Activated CD8-positive, alpha-beta memory T cell treated with anti-CD3 and anti-CD28 coated beads, Interleukin-2, amount 10 ng/mL, durations not matched to agents 7 days and 5 days (primary cell): ENCODE measurements at regions of chr1 and their contacts with region 1.

Region 1: DNA sequence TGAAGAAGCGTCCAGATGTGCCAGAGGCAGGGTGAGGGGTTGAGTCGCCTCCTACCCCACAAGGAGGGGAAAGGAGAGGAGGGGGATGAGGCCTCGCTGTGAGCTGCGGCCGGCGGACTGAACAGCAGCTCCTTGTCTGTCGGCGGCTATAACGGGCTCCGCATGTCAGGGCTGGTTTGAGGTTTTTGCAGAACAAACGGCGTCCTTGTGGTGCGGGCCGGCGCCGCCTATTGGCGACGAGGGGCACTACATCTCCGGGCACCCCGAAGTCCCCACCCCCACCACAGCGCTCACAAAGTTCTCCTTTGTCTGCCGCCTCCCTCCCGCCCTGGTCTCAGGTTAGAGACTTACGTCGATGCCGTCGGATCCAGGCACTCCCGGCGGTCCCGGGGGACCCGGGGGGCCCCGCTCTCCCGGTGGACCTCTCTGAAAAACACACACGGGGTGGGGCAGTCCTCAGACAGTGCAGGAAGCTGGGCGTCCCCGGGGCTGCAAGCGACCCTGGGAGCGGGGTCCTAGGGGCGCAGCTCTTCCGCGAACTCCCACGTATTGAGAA is 1.8 kb downstream of the COL9A2 start:
- DNase-seq: peak; percentile 90
- ATAC-seq: peak; percentile 77
- H3K4me3 Mint-ChIP-seq: peak overlapping the region; percentile 74
- H3K27ac Mint-ChIP-seq: peak overlapping the region; percentile 66
- H3K4me1 Mint-ChIP-seq: peaks cover 42% of the 10 kb centered on the region
- H3K27me3 Mint-ChIP-seq: peaks cover 25% of the 10 kb centered on the region

Region 2: GRCh38 chr1:40153073-40153770 is 162.1 kb before region 1 on chr1:
- CTCF ChIA-PET with region 1: interaction called, 106 read pairs
- DNase-seq: peak; percentile 48
- ATAC-seq: peak; percentile 86
- H3K4me3 Mint-ChIP-seq: no peak overlapping the region
- H3K27ac Mint-ChIP-seq: no peak overlapping the region
- H3K4me1 Mint-ChIP-seq: peaks cover 11% of the 10 kb centered on the region
- H3K27me3 Mint-ChIP-seq: peaks cover 4% of the 10 kb centered on the region

Region 3: DNA sequence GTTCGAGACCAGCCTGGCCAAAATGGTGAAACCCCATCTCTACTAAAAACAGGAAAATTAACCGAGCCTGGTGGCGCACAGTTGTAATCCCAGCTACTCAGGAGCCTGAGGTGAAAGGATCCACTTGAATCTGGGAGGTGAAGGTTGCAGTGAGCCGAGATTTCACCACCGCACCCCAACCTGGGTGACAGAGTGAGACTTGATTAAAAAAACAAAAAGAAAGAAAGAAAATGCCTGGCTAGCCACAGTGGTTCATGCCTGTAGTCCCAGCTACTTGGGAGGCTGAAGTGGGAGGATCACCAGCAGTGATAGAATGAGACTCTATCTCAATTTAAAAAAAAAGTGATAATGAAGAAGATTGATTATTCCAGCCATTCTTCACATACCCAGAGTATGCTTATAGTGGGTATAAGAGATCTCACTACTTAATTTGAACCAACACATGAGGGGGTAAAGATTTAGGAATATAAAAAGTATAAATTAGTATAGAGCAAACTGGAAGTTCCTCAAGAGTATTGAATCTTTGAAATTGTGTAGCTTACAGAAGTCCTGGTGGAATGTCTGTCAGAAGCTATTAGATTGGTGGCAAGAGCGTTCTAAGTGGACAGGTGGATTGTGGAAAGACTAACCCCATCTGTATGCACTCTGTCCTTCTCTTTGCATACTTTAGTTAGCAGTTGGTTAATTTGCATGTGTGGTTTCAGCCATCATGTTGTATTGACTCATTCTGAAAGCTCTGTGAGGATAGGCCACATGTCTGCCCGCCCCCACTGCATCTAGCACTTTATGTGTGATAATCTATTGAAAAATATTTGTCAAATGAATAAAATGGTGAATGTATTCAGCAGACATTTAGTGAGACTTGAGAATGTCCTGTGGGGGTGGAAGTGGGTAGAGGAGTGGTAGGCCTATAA is 129.1 kb before region 1 on chr1:
- CTCF ChIA-PET with region 1: interaction called, 13 read pairs
- DNase-seq: peak; percentile 81
- ATAC-seq: peak; percentile 97
- H3K4me3 Mint-ChIP-seq: peak overlapping the region; percentile 39
- H3K27ac Mint-ChIP-seq: peak overlapping the region; percentile 88
- H3K4me1 Mint-ChIP-seq: peaks cover 60% of the 10 kb centered on the region
- H3K27me3 Mint-ChIP-seq: no peaks in the 10 kb centered on the region

Region 4: GRCh38 chr1:40291293-40291692 is 24.0 kb before region 1 on chr1:
- CTCF ChIA-PET with region 1: interaction called, 17 read pairs
- DNase-seq: no peak
- ATAC-seq: no peak
- H3K4me3 Mint-ChIP-seq: no peak overlapping the region
- H3K27ac Mint-ChIP-seq: no peak overlapping the region
- H3K4me1 Mint-ChIP-seq: peaks cover 9% of the 10 kb centered on the region
- H3K27me3 Mint-ChIP-seq: no peaks in the 10 kb centered on the region

Region 5: DNA sequence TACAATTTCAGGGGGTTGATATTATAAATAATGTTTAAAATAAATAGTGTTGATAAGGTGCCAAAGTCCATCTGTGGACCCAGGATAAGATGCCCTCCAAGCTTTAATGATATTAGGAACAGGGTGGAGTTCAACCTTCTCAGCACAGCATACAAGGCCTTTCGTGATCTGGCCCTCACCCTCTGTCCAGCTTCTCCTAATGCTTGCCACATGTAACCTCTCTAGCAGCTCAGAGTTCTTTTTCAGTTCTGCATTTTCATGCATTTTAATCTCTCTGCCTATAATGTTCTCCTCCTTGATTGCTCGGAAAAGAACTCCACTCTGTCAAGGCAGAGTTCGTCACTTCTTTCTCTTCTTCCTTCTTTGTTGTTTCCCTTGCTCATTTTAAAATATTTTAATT is 36.8 kb after region 1 on chr1:
- CTCF ChIA-PET with region 1: no interaction called
- DNase-seq: no peak
- ATAC-seq: no peak
- H3K4me3 Mint-ChIP-seq: no peak overlapping the region
- H3K27ac Mint-ChIP-seq: no peak overlapping the region
- H3K4me1 Mint-ChIP-seq: no peaks in the 10 kb centered on the region
- H3K27me3 Mint-ChIP-seq: no peaks in the 10 kb centered on the region

Region 6: DNA sequence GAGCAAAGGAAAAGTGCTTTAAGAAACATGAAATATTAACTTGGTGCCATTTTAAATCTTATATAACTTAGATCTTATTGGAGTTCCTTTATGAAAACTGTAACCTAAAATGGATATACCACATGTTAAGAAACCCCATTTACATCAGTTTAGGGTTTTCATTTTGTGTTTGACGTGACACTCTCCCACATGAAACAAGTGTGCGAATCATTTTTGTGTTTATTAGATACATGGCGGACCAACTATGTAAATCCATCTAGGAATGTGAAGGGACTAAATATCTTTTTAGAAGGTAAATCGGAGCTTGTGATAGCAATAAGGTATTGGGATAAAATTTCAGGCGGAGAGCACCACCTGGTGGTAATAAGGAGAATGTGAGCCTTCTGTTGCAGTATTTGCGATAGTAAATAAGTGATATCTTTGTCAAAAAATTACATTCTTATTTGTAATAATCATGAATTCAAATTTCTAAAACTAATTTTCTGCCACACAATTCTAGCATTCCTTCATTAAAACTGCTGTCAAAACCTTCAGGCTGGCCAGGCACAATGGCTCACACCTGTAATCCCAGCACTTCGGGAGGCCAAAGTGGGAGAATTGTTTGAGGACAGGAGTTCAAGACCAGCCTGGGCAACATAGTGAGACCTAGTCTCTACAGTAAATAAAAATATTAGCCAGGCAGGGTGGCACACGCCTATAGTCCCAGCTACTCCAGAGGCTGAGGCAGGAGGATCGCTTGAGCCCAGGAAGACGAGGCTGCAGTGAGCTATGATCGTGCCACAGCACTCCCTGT is 89.5 kb after region 1 on chr1:
- CTCF ChIA-PET with region 1: interaction called, 27 read pairs
- DNase-seq: no peak
- ATAC-seq: peak; percentile 50
- H3K4me3 Mint-ChIP-seq: peak overlapping the region; percentile 4
- H3K27ac Mint-ChIP-seq: peak overlapping the region; percentile 82
- H3K4me1 Mint-ChIP-seq: peaks cover 54% of the 10 kb centered on the region
- H3K27me3 Mint-ChIP-seq: no peaks in the 10 kb centered on the region

Region 7: DNA sequence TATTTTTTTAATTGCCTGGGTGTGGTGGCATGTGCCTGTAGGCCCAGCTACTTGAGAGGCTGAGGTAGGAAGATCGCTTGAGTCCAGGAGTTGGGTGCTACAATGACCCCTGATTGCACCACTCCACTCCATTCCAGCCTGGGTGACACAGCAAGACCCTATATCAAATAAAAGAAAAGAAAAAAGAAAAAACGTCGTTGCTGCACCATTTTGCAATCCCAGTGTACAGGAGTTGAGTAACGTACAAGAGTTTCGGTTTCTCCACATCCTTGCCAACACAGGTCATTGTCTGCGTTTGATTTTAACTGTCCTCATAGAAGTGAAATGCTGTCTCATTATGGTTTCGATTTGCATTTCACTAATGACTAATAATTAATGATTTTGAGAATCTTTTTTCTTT is 224.0 kb after region 1 on chr1:
- CTCF ChIA-PET with region 1: no interaction called
- DNase-seq: no peak
- ATAC-seq: no peak
- H3K4me3 Mint-ChIP-seq: no peak overlapping the region
- H3K27ac Mint-ChIP-seq: peak overlapping the region; percentile 56
- H3K4me1 Mint-ChIP-seq: no peaks in the 10 kb centered on the region
- H3K27me3 Mint-ChIP-seq: no peaks in the 10 kb centered on the region

Region 8: DNA sequence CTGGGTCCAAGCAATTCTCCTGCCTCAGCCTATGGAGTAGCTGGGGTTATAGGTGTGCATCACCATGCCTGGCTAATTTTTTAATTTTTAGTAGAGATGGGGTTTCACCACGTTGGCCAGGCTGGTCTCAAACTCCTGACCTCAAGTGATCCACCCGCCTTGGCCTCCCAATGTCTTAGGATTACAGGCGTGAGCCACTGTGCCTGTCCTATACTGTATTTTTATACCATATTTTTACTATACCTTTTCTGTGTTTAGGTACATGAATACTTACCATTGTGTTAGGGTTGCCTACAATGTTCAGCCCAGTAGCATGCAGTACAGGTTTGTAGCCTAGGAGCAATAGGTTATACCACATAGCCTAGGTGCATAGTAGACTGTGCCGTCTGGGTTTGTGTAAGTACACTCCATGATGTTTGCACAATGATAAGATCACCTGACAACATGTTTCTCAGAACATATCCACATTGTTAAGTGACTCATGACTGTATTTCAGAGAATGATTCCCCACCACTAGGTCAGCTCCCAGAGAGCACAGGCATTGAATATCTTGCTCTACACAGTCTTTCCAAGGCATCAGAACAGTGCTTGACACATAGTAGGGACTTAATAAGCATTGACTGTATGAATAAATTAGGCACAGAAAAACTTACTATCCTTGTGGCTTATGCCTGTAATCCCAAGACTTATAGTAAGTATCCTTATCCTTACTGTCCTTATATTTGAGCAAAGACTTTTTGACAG is 552.9 kb after region 1 on chr1:
- CTCF ChIA-PET with region 1: no interaction called
- DNase-seq: no peak
- ATAC-seq: peak; percentile 85
- H3K4me3 Mint-ChIP-seq: no peak overlapping the region
- H3K27ac Mint-ChIP-seq: peak overlapping the region; percentile 12
- H3K4me1 Mint-ChIP-seq: peaks cover 25% of the 10 kb centered on the region
- H3K27me3 Mint-ChIP-seq: no peaks in the 10 kb centered on the region